Motor neuron (in vitro differentiated cells): ENCODE measurements at regions of chr11 and their contacts with region 1.

Region 1: DNA sequence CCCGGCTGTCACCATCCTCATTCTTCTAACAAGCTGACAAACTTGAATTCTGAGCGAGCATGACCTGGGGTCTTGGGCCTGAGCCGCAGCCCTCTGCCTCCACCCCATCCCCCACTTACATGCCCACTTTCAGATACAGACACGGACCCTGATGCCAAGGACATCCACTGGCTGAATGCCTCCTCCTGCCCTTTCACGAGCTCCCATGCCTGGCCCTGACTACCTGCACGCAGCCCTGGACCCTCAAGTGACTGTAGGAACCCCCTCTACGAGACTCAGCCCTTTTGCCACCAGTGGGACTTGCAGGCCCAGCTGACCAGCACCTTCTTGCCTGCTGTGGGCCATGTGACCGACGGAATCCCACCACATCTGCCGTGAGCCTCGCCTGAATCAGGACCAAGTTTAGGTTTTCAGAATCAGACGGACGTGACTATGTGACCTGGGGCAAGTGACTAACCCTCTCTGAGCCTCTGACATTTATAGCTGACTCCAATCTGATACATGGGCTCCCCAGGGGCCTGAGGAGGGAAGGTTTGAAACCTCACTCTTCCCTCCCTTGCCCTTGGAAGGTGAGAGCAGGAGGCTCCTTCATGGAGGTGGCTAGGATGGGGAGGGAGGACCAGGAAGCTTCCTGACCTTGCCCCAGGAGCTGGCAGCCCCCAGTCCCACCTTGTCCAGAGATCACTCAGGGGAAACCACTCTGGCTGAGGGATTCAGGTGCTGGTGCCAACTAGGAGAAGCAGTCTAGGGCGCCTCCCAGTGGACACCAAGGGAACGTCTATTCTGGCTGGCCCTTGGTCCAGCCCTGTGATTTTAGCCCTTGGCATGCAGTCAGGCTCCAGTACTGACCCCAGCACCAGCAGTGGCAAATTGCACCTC is 46.9 kb upstream of the SYT7 start:
- ATAC-seq: peak; percentile 27 to 98 (median 51)
- H3K4me3 ChIP-seq: no peak overlapping the region
- H3K27ac ChIP-seq: no peak overlapping the region
- H3K4me1 ChIP-seq: peaks cover 40 to 48% of the 10 kb centered on the region in 2 donors

Region 2: GRCh38 chr11:61102667-61103571 is 524.9 kb before region 1 on chr11:
- in situ Hi-C with region 1: no loop called
- ATAC-seq: peak in 2 of 8 experiments; percentile 29 to 52
- H3K4me3 ChIP-seq: no peak overlapping the region
- H3K27ac ChIP-seq: no peak overlapping the region
- H3K4me1 ChIP-seq: peaks cover 0 to 6% of the 10 kb centered on the region in 2 donors

Region 3: DNA sequence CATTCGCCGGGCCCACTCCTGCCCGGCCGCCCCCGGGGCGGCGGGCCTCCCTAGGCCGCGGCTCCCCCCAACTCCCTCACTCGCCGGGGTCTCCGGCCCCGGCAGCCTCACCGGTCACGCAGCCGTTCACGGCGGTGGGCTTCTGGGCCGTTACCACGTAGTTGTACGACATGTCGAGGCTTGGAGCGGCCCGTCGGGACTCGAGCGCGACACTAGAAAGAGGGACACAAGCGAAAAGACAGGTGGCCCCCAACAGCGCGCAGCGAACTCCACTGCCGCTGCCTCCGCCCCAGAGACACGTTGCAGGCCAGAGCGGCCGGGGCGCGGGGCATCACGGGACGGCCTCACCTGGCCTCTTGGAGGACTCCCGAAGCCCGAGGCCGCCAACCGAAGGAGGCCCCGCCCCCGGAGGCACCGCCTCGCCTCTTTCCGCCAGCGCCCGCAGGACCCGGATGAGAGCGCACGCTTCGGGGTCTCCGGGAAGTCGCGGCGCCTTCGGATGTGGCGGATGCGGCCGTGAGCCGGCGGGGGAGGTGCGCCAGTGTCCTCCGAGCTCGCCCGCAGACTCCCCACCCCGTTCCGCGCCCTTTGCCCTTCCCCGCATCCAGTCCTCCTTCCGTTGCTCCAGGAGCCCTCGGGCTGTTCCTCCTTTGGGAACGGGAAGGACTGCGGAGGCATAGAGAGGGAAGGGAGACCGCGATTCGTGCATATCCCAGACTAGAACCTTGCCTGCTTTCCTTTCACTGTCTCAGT is 294.8 kb before region 1 on chr11 and contains the starts of genes DDB1 and TKFC:
- in situ Hi-C with region 1: loop called in 1 of 9 experiments (anchors 25 kb)
- ATAC-seq: peak; percentile 77 to 94 (median 92)
- H3K4me3 ChIP-seq: peak within 1 kb of the TSS; percentile 58 to 95 (median 91)
- H3K27ac ChIP-seq: peak within 1 kb of the TSS; percentile 93 to 97
- H3K4me1 ChIP-seq: peaks cover 34 to 41% of the 10 kb centered on the region in 2 donors
- total RNA-seq, gene DDB1: 144 to 240 (median 190) TPM
- total RNA-seq, gene TKFC: 11.1 to 84.6 (median 20.1) TPM

Region 4: DNA sequence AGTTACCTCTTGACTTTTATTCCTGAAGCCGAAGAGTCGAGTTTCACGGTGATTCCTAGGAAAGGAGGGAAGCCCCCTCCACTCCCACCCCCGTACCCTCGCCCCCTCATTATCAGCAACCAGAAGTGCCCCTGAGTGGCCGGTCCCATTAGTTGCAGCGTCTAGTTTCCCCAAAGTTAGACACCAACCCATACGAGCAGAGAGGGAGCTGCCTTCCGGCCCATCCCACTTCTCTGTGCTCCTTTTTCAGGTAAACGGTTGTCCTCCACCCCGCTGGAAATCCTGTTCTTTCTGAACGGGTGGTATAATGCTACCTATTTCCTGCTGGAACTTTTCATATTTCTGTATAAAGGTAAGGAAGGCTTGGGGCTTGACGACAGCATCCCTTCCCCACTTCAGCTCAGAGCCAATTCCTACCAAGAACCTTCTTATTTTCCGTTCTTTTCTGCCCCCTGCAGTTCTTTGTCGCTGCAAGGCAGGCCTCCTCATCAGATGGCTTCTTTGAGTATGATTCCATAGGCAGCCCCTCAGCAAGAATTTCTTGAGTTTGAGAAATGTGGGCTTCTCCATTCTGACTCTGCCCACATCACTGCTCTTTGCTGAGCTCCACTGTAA is 234.7 kb before region 1 on chr11:
- in situ Hi-C with region 1: no loop called
- ATAC-seq: peak; percentile 26 to 65 (median 54)
- H3K4me3 ChIP-seq: peak overlapping the region; percentile 46 to 59 (median 54)
- H3K27ac ChIP-seq: no peak overlapping the region
- H3K4me1 ChIP-seq: no peaks in the 10 kb centered on the region

Region 5: DNA sequence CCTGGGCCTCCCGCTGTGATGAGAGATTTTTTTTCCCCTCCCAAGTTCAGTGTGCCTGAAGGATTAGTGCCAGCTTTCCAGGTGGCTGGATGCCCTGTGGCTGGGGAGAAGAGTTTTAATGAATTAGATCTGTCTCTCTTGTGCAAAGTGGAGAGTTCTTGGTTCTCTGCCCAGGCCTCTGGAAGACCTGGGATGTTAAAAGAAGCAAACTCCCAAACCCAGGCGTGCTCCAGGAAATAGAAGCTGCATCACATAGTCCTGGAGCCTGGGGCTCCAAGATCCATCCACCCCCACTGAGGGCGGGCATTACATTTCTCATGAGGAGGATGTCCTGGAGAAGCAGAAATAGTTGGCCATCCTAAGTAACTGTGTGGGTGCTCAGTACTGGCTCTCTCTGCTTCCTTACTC is 167.3 kb before region 1 on chr11:
- in situ Hi-C with region 1: loop called in 3 of 9 experiments (anchors 25 kb)
- ATAC-seq: peak in 4 of 8 experiments; percentile 21 to 85 (median 54)
- H3K4me3 ChIP-seq: no peak overlapping the region
- H3K27ac ChIP-seq: no peak overlapping the region
- H3K4me1 ChIP-seq: no peaks in the 10 kb centered on the region

Region 6: GRCh38 chr11:61477727-61478148 is 150.1 kb before region 1 on chr11:
- in situ Hi-C with region 1: loop called in 7 of 9 experiments (anchors 10 to 25 kb)
- ATAC-seq: peak; percentile 6 to 61 (median 16)
- H3K4me3 ChIP-seq: no peak overlapping the region
- H3K27ac ChIP-seq: no peak overlapping the region
- H3K4me1 ChIP-seq: peaks cover 25 to 34% of the 10 kb centered on the region in 2 donors